HCT116 (cell line): ENCODE measurements at regions of chr2 and their contacts with region 1.

Region 1: DNA sequence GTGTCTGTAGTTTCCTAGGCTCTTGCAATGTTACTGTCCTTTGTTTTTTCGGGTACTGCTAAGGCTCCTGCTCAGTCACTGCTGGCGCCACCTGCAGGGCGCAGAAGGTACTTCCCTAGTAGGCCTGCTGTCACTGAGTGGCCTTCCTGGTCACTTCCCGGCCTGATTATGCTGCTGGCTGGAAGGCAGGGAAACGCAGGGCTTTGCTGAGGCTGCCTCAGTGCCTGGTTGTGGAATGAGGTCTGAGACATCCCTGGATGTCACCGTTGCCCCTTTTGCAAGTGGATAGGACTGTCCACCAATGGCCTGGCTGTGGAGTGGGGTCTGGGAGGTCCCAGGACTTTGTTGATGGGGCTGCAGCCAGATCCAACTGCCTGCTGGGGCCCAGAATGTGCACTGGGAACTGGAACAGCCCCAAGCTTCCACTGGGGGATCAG is 13.1 kb downstream of the DAW1 start:
- DNase-seq: peak; percentile 73
- ATAC-seq: peak; percentile 98
- H3K4me3 ChIP-seq: no peak overlapping the region
- H3K27ac ChIP-seq: no peak overlapping the region; the same call in 1 of the 2 replicates
- H3K4me1 ChIP-seq: peaks cover 3 to 15% of the 10 kb centered on the region in 2 experiments; a peak in 2 of 4 replicates
- H3K27me3 ChIP-seq: no peaks in the 10 kb centered on the region
- CTCF ChIP-seq: peak; percentile 92 to 97 (median 95)
- POLR2A ChIP-seq: no peak
- RAD21 ChIP-seq: peak; percentile 78

Region 2: DNA sequence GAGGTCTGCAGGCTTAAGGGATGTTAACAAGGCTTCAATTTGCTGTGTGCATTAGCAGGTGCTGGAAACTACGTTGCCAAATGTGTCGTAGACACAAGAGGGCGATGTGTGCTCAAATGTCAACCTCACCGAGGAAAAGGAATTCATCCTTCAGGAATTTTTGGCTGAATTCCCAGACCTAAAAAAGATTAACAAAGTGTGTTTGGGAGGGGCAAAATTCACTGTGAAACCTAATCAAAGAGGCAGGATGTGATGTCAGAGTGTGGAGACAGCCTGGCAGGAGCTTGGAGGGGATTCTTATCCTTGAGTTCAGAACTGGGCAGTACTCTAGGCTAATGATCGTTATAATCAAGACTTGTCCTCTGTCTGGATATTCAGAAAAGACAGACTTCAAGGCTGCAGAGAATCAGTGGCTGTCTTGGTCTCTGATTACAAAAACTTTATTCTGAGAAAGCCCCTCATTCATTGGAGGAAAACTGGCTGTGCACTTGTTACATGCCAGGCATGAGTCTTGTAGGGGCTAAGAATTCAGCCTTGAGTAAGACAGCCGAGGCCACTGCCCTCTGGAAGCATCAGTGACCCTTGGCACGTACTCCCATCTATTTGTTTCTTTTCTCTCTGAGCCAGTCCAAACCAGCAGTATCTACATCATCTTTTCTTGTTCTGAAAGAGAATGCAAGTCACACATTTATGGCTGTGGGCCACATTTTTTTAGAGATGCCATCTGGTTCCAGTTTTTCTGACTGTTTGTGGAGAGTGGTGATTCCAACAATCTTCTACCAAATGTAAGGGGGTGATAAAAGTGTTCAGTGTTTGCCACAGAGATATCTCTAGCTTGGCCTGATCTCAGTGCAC is 478.1 kb before region 1 on chr2:
- CTCF ChIA-PET with region 1: no interaction called
- POLR2A ChIA-PET with region 1: no interaction called
- RAD21 ChIA-PET with region 1: no interaction called
- intact Hi-C with region 1: loop called (anchors 2 kb)
- DNase-seq: peak; percentile 94
- ATAC-seq: peak; percentile 92
- H3K4me3 ChIP-seq: 0 out of 4 replicates have a peak overlapping the region, but pooled peaks of 1 of the 2 experiments have one; percentile 4
- H3K27ac ChIP-seq: peak overlapping the region; percentile 11; the same call in 1 of the 2 replicates
- H3K4me1 ChIP-seq: peaks cover 6 to 27% of the 10 kb centered on the region in 2 experiments
- H3K27me3 ChIP-seq: no peaks in the 10 kb centered on the region
- CTCF ChIP-seq: peak; percentile 71 to 92 (median 84)
- POLR2A ChIP-seq: no peak
- RAD21 ChIP-seq: peak; percentile 99

Region 3: GRCh38 chr2:227479865-227480475 is 404.6 kb before region 1 on chr2:
- CTCF ChIA-PET with region 1: interaction called, 3 read pairs
- POLR2A ChIA-PET with region 1: no interaction called
- RAD21 ChIA-PET with region 1: no interaction called
- intact Hi-C with region 1: loop called (anchors 10 kb)
- DNase-seq: no peak
- ATAC-seq: peak; percentile 72
- H3K4me3 ChIP-seq: no peak overlapping the region
- H3K27ac ChIP-seq: no peak overlapping the region
- H3K4me1 ChIP-seq: peaks cover 0 to 3% of the 10 kb centered on the region in 2 experiments; a peak in 2 of 4 replicates
- H3K27me3 ChIP-seq: no peaks in the 10 kb centered on the region
- CTCF ChIP-seq: peak; percentile 19 to 65 (median 37); a peak in 4 of 6 replicates
- POLR2A ChIP-seq: no peak
- RAD21 ChIP-seq: peak; percentile 73

Region 4: GRCh38 chr2:227748079-227748478 is 136.4 kb before region 1 on chr2:
- CTCF ChIA-PET with region 1: no interaction called
- POLR2A ChIA-PET with region 1: no interaction called
- RAD21 ChIA-PET with region 1: no interaction called
- intact Hi-C with region 1: loop called (anchors 10 kb)
- DNase-seq: peak; percentile 54
- ATAC-seq: peak; percentile 98
- H3K4me3 ChIP-seq: no peak overlapping the region
- H3K27ac ChIP-seq: no peak overlapping the region
- H3K4me1 ChIP-seq: no peaks in the 10 kb centered on the region
- H3K27me3 ChIP-seq: no peaks in the 10 kb centered on the region
- CTCF ChIP-seq: peak; percentile 54 to 94 (median 90); a peak in 5 of 6 replicates
- POLR2A ChIP-seq: no peak
- RAD21 ChIP-seq: peak; percentile 67

Region 5: GRCh38 chr2:227774011-227774624 is 110.4 kb before region 1 on chr2:
- CTCF ChIA-PET with region 1: interaction called, 4 read pairs
- POLR2A ChIA-PET with region 1: no interaction called
- RAD21 ChIA-PET with region 1: no interaction called
- intact Hi-C with region 1: loop called (anchors 1 kb)
- DNase-seq: peak; percentile 8
- ATAC-seq: peak; percentile 89
- H3K4me3 ChIP-seq: no peak overlapping the region
- H3K27ac ChIP-seq: no peak overlapping the region
- H3K4me1 ChIP-seq: no peaks in the 10 kb centered on the region
- H3K27me3 ChIP-seq: no peaks in the 10 kb centered on the region
- CTCF ChIP-seq: peak; percentile 56 to 98 (median 66); a peak in 5 of 6 replicates
- POLR2A ChIP-seq: no peak
- RAD21 ChIP-seq: peak; percentile 68

Region 6: GRCh38 chr2:227817850-227818674 is 66.5 kb before region 1 on chr2:
- CTCF ChIA-PET with region 1: no interaction called
- POLR2A ChIA-PET with region 1: no interaction called
- RAD21 ChIA-PET with region 1: no interaction called
- intact Hi-C with region 1: loop called (anchors 1 kb)
- DNase-seq: peak; percentile 99
- ATAC-seq: peak; percentile 83
- H3K4me3 ChIP-seq: peak overlapping the region; percentile 6 to 41
- H3K27ac ChIP-seq: peak overlapping the region; percentile 43; the same call in 1 of the 2 replicates
- H3K4me1 ChIP-seq: peaks cover 31 to 64% of the 10 kb centered on the region in 2 experiments
- H3K27me3 ChIP-seq: no peaks in the 10 kb centered on the region
- CTCF ChIP-seq: no peak
- POLR2A ChIP-seq: no peak
- RAD21 ChIP-seq: peak; percentile 40

Region 7: GRCh38 chr2:228094377-228094921 is 209.9 kb after region 1 on chr2:
- CTCF ChIA-PET with region 1: no interaction called
- POLR2A ChIA-PET with region 1: no interaction called
- RAD21 ChIA-PET with region 1: no interaction called
- intact Hi-C with region 1: no loop called
- DNase-seq: no peak
- ATAC-seq: no peak
- H3K4me3 ChIP-seq: no peak overlapping the region
- H3K27ac ChIP-seq: no peak overlapping the region
- H3K4me1 ChIP-seq: no peaks in the 10 kb centered on the region
- H3K27me3 ChIP-seq: no peaks in the 10 kb centered on the region
- CTCF ChIP-seq: no peak
- POLR2A ChIP-seq: no peak
- RAD21 ChIP-seq: no peak

Region 8: DNA sequence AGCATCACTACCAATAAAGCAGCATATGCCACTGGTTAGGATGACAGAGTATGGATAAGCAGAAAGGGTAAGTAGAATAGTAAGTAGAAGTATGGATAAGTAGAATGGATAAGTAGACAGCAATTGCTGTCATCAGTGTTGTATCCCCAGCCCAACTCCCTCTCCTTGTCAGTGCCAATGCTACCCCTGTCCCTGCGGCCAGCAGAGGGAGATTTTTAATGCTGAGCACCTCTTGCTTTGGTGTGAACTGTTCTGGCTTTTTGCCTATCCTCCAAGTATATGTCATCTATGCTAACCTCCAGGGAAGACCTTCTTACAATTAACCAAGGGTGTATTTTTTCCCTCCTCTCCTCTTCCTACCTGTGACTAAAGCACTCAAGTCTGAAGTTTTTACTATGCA is 433.7 kb after region 1 on chr2:
- CTCF ChIA-PET with region 1: no interaction called
- POLR2A ChIA-PET with region 1: no interaction called
- RAD21 ChIA-PET with region 1: no interaction called
- intact Hi-C with region 1: no loop called
- DNase-seq: peak; percentile 27
- ATAC-seq: peak; percentile 90
- H3K4me3 ChIP-seq: no peak overlapping the region
- H3K27ac ChIP-seq: no peak overlapping the region
- H3K4me1 ChIP-seq: no peaks in the 10 kb centered on the region
- H3K27me3 ChIP-seq: no peaks in the 10 kb centered on the region
- CTCF ChIP-seq: peak; percentile 34 to 75 (median 70); a peak in 5 of 6 replicates
- POLR2A ChIP-seq: no peak
- RAD21 ChIP-seq: peak; percentile 60